ENCODE measurements at regions of chr19 and their contacts with region 1.

Region 1: DNA sequence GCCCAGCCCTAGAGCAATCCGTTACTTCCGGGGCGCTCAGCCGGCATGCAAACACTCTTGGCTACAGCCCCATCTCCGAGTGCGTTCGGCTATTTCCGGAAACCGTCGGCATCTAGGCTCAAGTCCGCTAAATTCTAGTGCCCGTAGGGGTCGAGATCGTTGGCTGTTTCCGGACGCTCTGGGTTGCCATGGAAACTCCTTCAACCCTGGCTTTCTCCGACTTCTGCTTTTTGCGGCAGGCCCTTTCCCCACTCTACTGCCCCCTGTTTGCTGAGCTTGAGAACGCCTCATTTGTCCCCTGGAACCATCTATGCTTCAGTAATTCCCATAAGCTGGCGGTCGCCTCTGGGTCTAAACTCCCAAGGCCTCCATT is 533 bp upstream of the PIK3R2 start:
- DNase-seq: peak; percentile 100
- ATAC-seq: peak; percentile 81
- H3K4me3 Mint-ChIP-seq: peak overlapping the region; percentile 79
- H3K27ac Mint-ChIP-seq: peak overlapping the region; percentile 98
- H3K4me1 Mint-ChIP-seq: peaks cover 30% of the 10 kb centered on the region
- H3K27me3 Mint-ChIP-seq: no peaks in the 10 kb centered on the region

Region 2: GRCh38 chr19:18021121-18021755 is 131.2 kb before region 1 on chr19:
- CTCF ChIA-PET with region 1: no interaction called
- POLR2A ChIA-PET with region 1: no interaction called
- DNase-seq: peak; percentile 47
- ATAC-seq: no peak
- H3K4me3 Mint-ChIP-seq: peak overlapping the region; percentile 56
- H3K27ac Mint-ChIP-seq: peak overlapping the region; percentile 84
- H3K4me1 Mint-ChIP-seq: peaks cover 67% of the 10 kb centered on the region
- H3K27me3 Mint-ChIP-seq: no peaks in the 10 kb centered on the region

Region 3: GRCh38 chr19:18141031-18141430 is 11.4 kb before region 1 on chr19:
- CTCF ChIA-PET with region 1: interaction called, 11 read pairs
- POLR2A ChIA-PET with region 1: interaction called, 11 read pairs
- DNase-seq: no peak
- ATAC-seq: no peak
- H3K4me3 Mint-ChIP-seq: no peak overlapping the region
- H3K27ac Mint-ChIP-seq: no peak overlapping the region
- H3K4me1 Mint-ChIP-seq: no peaks in the 10 kb centered on the region
- H3K27me3 Mint-ChIP-seq: no peaks in the 10 kb centered on the region

Region 4: DNA sequence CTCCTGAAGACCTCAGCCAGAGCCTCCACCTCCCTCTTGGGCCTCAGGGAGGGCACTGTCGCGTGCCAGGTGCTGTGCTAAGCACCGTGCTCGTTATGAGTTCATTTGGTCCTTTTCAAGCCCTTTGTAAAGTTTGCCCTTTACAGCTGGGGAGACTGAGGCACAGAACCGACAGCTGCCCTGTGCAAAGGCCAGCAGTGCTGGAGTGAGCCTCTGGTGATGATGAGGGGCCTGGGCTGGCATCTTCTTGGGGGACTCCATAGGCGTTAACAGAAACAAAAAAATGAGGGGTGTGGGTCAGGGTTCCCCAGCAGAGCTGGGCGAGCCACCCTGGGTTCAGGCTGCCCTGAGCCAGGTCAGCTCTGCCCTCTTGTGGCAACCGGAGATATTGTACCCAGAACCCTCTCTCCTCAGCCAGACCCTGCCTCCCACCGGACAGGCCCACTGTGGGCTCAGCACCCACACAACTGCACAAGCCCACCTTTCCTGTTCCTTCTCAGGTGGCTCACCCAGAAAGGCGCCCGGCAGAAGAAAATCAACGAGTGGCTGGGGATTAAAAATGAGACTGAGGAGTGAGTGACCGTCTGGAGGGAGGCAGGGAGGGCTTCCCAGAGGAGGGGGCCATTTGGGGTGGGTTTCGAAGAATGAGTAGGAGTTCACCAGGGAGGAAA is 15.7 kb after region 1 on chr19:
- CTCF ChIA-PET with region 1: interaction called, 15 read pairs
- POLR2A ChIA-PET with region 1: no interaction called
- DNase-seq: peak; percentile 75
- ATAC-seq: peak; percentile 98
- H3K4me3 Mint-ChIP-seq: no peak overlapping the region
- H3K27ac Mint-ChIP-seq: no peak overlapping the region
- H3K4me1 Mint-ChIP-seq: peaks cover 9% of the 10 kb centered on the region
- H3K27me3 Mint-ChIP-seq: no peaks in the 10 kb centered on the region

Region 5: GRCh38 chr19:18233224-18233825 is 80.9 kb after region 1 on chr19:
- CTCF ChIA-PET with region 1: no interaction called
- POLR2A ChIA-PET with region 1: no interaction called
- DNase-seq: peak; percentile 79
- ATAC-seq: peak; percentile 87
- H3K4me3 Mint-ChIP-seq: no peak overlapping the region
- H3K27ac Mint-ChIP-seq: no peak overlapping the region
- H3K4me1 Mint-ChIP-seq: peaks cover 6% of the 10 kb centered on the region
- H3K27me3 Mint-ChIP-seq: peaks cover 27% of the 10 kb centered on the region